Mucosa of descending colon (tissue), 3 donors: ENCODE measurements at regions of chr1 and their contacts with region 1.

Region 1: DNA sequence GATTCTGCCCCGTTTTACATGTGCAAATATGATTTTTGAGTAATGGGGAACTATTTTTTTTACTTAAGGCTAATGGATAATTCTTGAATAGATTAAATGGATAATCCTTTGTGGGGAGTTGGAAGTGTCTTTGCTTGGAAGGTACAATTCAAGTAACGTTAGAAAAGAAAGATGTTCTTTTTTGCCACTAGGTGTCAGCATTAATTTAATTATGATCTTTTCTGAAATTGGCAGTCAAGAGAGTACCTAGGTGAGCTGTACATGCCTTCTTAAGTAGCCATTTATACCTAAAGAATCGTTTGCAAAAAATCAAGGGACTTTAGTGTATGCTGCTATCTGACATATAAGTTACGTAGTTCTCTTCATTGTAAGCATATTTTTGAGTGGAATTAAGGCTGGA is 2.2 kb downstream of the FBXO28 start:
- DNase-seq: no peak
- ATAC-seq: peak; percentile 37
- H3K4me3 ChIP-seq: no peak overlapping the region
- H3K4me1 ChIP-seq: peaks cover 19% of the 10 kb centered on the region
- CTCF ChIP-seq: no peak

Region 2: DNA sequence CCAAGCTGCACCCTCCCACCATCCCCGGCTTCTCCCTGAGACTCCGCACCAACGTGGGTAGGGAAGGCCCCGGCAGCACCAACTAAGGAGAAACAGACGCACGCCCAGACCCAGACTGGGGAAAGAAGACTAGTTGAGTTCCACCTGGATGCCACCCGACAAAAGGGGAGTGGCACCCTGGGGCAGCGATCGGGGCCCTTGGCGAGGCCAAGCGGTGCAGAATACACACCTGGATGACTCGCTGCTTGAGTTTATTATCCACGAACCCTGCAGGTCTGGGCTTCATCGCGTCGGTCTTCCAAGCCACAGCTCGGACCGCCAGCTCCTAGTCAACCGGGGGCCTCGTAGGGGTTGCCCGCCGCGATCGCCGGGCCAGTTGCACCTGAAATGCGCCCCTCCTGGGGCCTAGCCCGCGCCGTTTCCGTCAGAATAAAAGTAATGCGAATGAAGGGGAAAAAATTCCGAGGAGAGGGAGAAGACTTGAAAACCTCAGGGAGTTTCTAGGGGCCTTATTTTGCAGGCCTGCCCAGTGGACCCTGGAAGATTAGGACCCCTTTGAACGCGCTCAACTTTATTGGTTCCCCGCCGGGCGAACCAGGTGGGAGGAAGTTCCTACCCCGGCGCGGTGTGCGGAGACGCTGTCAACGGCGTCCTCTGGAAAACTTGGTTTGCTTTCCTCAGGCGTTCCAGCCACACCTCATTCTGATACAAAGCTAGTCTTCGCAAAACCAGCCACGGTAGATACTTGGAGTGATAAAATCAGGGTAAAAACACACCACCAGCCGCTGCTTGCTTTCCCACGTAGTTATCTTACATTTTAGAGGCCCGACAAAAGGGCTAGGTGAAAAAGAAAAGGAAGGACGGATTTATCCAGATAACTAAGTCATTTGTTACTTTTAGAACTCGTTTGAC is 214.0 kb after region 1 on chr1 and contains the start of gene NVL:
- intact Hi-C with region 1: loop called in 1 of 2 experiments (anchors 5 kb)
- DNase-seq: peak; percentile 88 to 89 (median 89)
- ATAC-seq: peak; percentile 96
- H3K4me3 ChIP-seq: peak within 1 kb of the TSS; percentile 78
- H3K4me1 ChIP-seq: peaks cover 17% of the 10 kb centered on the region
- CTCF ChIP-seq: no peak
- total RNA-seq, gene NVL: 32.2 to 45.6 (median 34.7) TPM